Activated CD4-positive, alpha-beta memory T cell treated with anti-CD3 and anti-CD28 coated beads for 36 hours (primary cell): ENCODE measurements at regions of chr19 and their contacts with region 1.

Region 1: GRCh38 chr19:16371540-16371986 is 46.9 kb downstream of the KLF2 start:
- DNase-seq: peak; percentile 95
- H3K4me3 Mint-ChIP-seq: peak overlapping the region; percentile 53
- H3K27ac Mint-ChIP-seq: peak overlapping the region; percentile 57
- H3K4me1 Mint-ChIP-seq: peaks cover 40% of the 10 kb centered on the region
- H3K27me3 Mint-ChIP-seq: peaks cover 7% of the 10 kb centered on the region

Region 2: GRCh38 chr19:16197622-16198369 is 173.8 kb before region 1 on chr19 and contains the start of gene AP1M1:
- CTCF ChIA-PET with region 1: interaction called, 3 read pairs
- POLR2A ChIA-PET with region 1: no interaction called
- intact Hi-C with region 1: loop called (anchors 5 kb)
- DNase-seq: peak; percentile 99
- H3K4me3 Mint-ChIP-seq: peak within 1 kb of the TSS; percentile 97
- H3K27ac Mint-ChIP-seq: peak within 1 kb of the TSS; percentile 92
- H3K4me1 Mint-ChIP-seq: peaks cover 41% of the 10 kb centered on the region
- H3K27me3 Mint-ChIP-seq: no peaks in the 10 kb centered on the region
- total RNA-seq, gene AP1M1: 100 to 113 TPM

Region 3: GRCh38 chr19:16338470-16339360 is 32.8 kb before region 1 on chr19:
- CTCF ChIA-PET with region 1: interaction called, 9 read pairs
- POLR2A ChIA-PET with region 1: interaction called, 18 read pairs
- intact Hi-C with region 1: loop called (anchors 1 kb)
- DNase-seq: peak; percentile 88
- H3K4me3 Mint-ChIP-seq: peak overlapping the region; percentile 42
- H3K27ac Mint-ChIP-seq: peak overlapping the region; percentile 60
- H3K4me1 Mint-ChIP-seq: peaks cover 50% of the 10 kb centered on the region
- H3K27me3 Mint-ChIP-seq: peaks cover 2% of the 10 kb centered on the region

Region 4: DNA sequence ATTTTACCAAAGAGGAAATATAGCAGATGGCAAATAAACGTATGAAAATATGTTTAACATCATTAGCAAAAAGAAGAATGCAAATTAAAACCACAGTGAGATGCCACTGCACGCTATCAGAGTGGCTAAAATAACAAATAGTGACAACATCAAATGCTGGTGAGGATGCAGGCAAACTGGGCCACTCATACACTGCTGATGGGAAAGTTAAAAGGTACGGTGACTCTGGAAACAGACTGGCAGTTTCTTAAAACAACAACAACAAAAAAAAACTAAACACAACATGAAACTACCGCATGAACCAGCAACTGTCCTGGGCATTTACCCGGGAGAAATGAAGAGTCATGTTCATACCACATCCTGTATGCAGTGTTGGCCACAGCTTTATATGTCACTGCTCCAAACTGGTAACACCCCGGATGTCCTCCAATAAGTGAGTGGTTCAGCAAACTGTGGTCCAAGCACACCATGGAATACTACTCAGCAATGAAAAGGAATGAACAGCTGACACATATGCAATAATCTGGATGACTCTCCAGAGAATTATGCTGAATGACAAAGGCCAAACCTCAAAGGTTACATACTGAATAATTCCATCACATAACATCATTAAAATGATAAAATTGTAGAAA is 77.9 kb after region 1 on chr19:
- CTCF ChIA-PET with region 1: no interaction called
- POLR2A ChIA-PET with region 1: no interaction called
- intact Hi-C with region 1: no loop called
- DNase-seq: peak; percentile 60
- H3K4me3 Mint-ChIP-seq: no peak overlapping the region
- H3K27ac Mint-ChIP-seq: peak overlapping the region; percentile 75
- H3K4me1 Mint-ChIP-seq: peaks cover 51% of the 10 kb centered on the region
- H3K27me3 Mint-ChIP-seq: no peaks in the 10 kb centered on the region

Region 5: DNA sequence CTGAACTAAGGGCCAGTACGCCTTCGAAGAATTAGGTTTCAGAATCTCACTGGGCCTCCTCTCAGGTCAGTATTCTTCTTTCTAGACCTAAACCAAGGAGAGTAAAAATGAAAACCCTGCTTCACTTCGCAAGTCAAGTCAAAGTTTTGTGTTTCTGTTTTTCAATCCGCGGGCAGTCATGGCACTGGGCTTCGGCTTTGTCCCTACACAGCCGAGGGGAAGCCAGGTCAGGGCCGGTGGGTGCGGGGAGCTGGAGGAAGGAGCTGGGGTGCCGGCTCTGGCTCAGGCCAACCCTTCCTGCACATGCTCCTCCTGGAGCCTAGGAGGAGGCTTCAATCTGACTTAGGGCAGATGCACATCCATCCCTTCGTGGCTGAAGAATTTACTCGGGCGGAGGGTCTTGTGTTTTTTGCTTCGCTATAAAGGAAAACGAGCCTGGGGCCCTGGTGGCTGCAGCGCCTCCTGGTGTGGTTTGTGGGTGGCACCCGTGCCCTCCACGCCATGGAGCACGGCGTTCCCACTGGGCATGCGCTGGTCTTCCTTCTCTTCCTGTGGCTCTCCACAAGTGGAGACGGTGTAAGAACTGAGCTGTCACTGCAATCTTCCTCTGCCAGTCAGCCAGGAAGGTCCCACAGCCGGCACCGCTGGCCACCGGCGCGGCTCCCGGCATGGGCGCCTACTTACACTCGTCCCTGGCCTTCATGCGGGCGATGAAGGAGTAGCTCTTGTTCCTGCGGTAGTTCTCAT is 147.1 kb after region 1 on chr19:
- CTCF ChIA-PET with region 1: no interaction called
- POLR2A ChIA-PET with region 1: no interaction called
- intact Hi-C with region 1: no loop called
- DNase-seq: no peak
- H3K4me3 Mint-ChIP-seq: no peak overlapping the region
- H3K27ac Mint-ChIP-seq: no peak overlapping the region
- H3K4me1 Mint-ChIP-seq: no peaks in the 10 kb centered on the region
- H3K27me3 Mint-ChIP-seq: no peaks in the 10 kb centered on the region